Activated CD8-positive, alpha-beta T cell treated with anti-CD3 and anti-CD28 coated beads, Interleukin-2, amount 10 ng/mL, durations not matched to agents 7 days and 5 days (primary cell): ENCODE measurements at regions of chr5 and their contacts with region 1.

Region 1: DNA sequence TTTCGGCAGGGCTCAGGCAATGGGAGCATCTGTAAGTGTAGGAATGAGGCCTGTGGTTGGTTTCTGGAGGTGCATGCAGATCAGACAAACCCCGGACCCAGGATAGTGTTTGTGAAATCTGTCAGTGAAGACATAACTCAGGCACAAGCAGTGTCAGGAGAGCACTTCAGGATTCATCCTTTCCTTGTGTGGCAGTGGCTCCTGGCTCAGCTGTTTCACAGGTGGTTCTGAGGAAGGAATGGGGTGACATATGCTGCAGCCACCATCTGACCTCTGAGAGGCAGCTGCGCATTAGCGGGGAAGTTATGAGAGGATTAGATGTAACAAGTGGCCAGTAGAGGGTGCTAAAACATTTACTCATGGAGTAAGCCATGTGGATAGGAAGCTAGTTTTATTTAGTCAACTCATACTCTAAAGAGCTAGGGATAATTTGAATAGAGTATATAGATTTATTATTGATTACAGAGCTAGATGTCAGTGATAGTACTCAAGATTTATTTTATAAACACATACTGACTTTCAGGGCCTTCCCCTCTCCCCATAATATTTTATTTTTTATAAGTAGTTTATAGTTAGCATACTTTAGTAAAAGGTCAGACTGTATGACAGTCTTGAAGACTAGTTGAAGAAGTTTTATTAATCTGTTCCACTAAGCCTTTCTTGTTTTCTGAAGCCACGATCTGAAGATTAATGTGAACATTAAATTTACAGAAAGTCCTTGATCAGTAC is 28.4 kb downstream of the NNT start:
- DNase-seq: peak; percentile 50
- ATAC-seq: peak; percentile 88
- H3K4me3 Mint-ChIP-seq: no peak overlapping the region
- H3K27ac Mint-ChIP-seq: no peak overlapping the region
- H3K4me1 Mint-ChIP-seq: peaks cover 6% of the 10 kb centered on the region
- H3K27me3 Mint-ChIP-seq: no peaks in the 10 kb centered on the region

Region 2: GRCh38 chr5:43602461-43603343 is 28.6 kb before region 1 on chr5 and contains the start of gene NNT:
- CTCF ChIA-PET with region 1: interaction called, 21 read pairs
- POLR2A ChIA-PET with region 1: interaction called, 3 read pairs
- DNase-seq: peak; percentile 84
- ATAC-seq: peak; percentile 92
- H3K4me3 Mint-ChIP-seq: peak within 1 kb of the TSS; percentile 92
- H3K27ac Mint-ChIP-seq: peak within 1 kb of the TSS; percentile 90
- H3K4me1 Mint-ChIP-seq: peaks cover 51% of the 10 kb centered on the region
- H3K27me3 Mint-ChIP-seq: no peaks in the 10 kb centered on the region
- total RNA-seq, gene NNT: 103 to 104 TPM

Region 3: DNA sequence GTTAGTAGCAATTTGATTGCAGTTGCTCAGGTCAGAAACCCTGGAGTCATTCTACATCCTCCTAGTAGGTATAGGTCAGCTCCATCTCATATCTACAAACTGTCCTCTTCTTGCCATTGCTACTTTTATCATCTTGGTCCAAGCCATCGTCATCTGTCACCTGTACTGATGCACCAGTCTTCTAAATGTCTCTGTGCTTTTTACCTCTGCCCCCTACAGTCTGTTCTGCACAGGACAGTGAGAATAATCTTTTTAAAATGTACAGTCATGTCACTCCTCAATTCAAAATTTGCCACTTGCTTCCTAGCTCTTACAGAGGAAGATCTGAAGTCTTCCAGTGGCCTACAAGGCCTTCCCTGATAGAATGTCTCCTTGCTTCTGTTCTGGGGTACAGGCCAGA is 21.6 kb before region 1 on chr5:
- CTCF ChIA-PET with region 1: interaction called, 21 read pairs
- POLR2A ChIA-PET with region 1: interaction called, 3 read pairs
- DNase-seq: peak; percentile 30
- ATAC-seq: peak; percentile 58
- H3K4me3 Mint-ChIP-seq: no peak overlapping the region
- H3K27ac Mint-ChIP-seq: no peak overlapping the region
- H3K4me1 Mint-ChIP-seq: peaks cover 32% of the 10 kb centered on the region
- H3K27me3 Mint-ChIP-seq: no peaks in the 10 kb centered on the region

Region 4: DNA sequence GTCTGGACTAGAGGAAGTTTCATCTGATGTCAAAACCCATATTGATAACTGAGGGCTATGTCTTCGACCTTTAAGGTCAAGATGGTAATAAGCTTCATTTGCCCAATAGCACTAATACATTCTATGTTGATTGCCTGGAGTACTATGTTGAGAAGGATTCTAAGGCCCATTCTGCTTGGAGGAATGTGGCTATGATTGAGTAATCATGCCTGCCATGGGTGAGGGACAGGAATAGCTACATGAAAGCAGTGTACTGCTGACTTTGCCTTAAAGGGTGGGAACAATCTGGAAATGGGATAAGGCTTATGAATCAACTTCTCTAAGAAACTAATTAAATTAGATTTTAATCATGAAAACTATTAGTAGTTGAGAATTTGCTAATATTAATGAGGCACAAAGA is 14.8 kb before region 1 on chr5:
- CTCF ChIA-PET with region 1: interaction called, 55 read pairs
- POLR2A ChIA-PET with region 1: no interaction called
- DNase-seq: no peak
- ATAC-seq: no peak
- H3K4me3 Mint-ChIP-seq: no peak overlapping the region
- H3K27ac Mint-ChIP-seq: no peak overlapping the region
- H3K4me1 Mint-ChIP-seq: no peaks in the 10 kb centered on the region
- H3K27me3 Mint-ChIP-seq: no peaks in the 10 kb centered on the region

Region 5: GRCh38 chr5:43646992-43647391 is 15.6 kb after region 1 on chr5:
- CTCF ChIA-PET with region 1: interaction called, 30 read pairs
- POLR2A ChIA-PET with region 1: no interaction called
- DNase-seq: no peak
- ATAC-seq: no peak
- H3K4me3 Mint-ChIP-seq: no peak overlapping the region
- H3K27ac Mint-ChIP-seq: no peak overlapping the region
- H3K4me1 Mint-ChIP-seq: no peaks in the 10 kb centered on the region
- H3K27me3 Mint-ChIP-seq: no peaks in the 10 kb centered on the region